Posterior vena cava (tissue), 2 donors: ENCODE measurements at regions of chr3 and their contacts with region 1.

Region 1: DNA sequence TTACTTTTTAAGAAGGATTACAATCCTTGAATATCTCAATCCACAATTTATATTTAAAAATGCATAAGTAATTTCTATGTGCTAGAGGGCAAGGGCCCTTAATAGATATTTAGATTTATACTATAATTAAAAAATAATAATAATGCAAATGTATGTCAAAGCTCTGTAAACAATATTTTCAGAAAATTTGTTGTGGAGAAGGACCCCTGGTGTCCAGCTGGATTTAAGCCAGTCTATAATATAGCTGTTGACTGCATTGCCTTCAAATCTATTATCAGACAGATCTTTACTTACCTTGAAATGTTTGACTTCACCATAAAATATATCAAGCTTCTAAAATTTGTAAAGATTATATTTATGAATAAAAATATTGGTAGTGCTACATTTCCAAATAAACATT is 65.6 kb downstream of the ZBTB20 start:
- DNase-seq: no peak

Region 2: GRCh38 chr3:115113367-115113766 is 31.9 kb after region 1 on chr3:
- intact Hi-C with region 1: no loop called
- DNase-seq: no peak

Region 3: GRCh38 chr3:115375362-115375761 is 293.9 kb after region 1 on chr3:
- intact Hi-C with region 1: loop called in 1 of 2 experiments (anchors 5 kb)
- DNase-seq: no peak